ENCODE measurements at regions of chr4 and their contacts with region 1.

Region 1: GRCh38 chr4:114780205-114780604 is 181.6 kb downstream of the UGT8 start:
- DNase-seq: peak; percentile 23 to 33
- H3K4me3 ChIP-seq: no peak overlapping the region
- H3K4me3 Mint-ChIP-seq: no peak overlapping the region
- H3K27ac Mint-ChIP-seq: no peak overlapping the region
- H3K4me1 ChIP-seq: no peaks in the 10 kb centered on the region
- H3K4me1 Mint-ChIP-seq: no peaks in the 10 kb centered on the region
- H3K27me3 ChIP-seq: no peaks in the 10 kb centered on the region
- H3K27me3 Mint-ChIP-seq: peaks cover 7% of the 10 kb centered on the region
- CTCF ChIP-seq: peak; percentile 39 to 43

Region 2: GRCh38 chr4:114807759-114808404 is 27.7 kb after region 1 on chr4:
- CTCF ChIA-PET with region 1: no interaction called
- POLR2A ChIA-PET with region 1: no interaction called
- intact Hi-C with region 1: loop called (anchors 1 kb)
- DNase-seq: peak; percentile 51 to 66
- H3K4me3 ChIP-seq: no peak overlapping the region
- H3K4me3 Mint-ChIP-seq: peak overlapping the region; percentile 32
- H3K27ac Mint-ChIP-seq: no peak overlapping the region
- H3K4me1 ChIP-seq: no peaks in the 10 kb centered on the region
- H3K4me1 Mint-ChIP-seq: peaks cover 6% of the 10 kb centered on the region
- H3K27me3 ChIP-seq: no peaks in the 10 kb centered on the region
- H3K27me3 Mint-ChIP-seq: peaks cover 5% of the 10 kb centered on the region
- CTCF ChIP-seq: peak; percentile 81 to 89

Region 3: GRCh38 chr4:115090483-115091075 is 310.4 kb after region 1 on chr4:
- CTCF ChIA-PET with region 1: no interaction called
- POLR2A ChIA-PET with region 1: no interaction called
- intact Hi-C with region 1: loop called (anchors 10 kb)
- DNase-seq: peak in 1 of 2 experiments; percentile 20
- H3K4me3 ChIP-seq: no peak overlapping the region
- H3K4me3 Mint-ChIP-seq: no peak overlapping the region
- H3K27ac Mint-ChIP-seq: no peak overlapping the region
- H3K4me1 ChIP-seq: no peaks in the 10 kb centered on the region
- H3K4me1 Mint-ChIP-seq: no peaks in the 10 kb centered on the region
- H3K27me3 ChIP-seq: no peaks in the 10 kb centered on the region
- H3K27me3 Mint-ChIP-seq: peaks cover 3% of the 10 kb centered on the region
- CTCF ChIP-seq: peak; percentile 43 to 57

Region 4: GRCh38 chr4:115234405-115235093 is 454.3 kb after region 1 on chr4:
- CTCF ChIA-PET with region 1: no interaction called
- POLR2A ChIA-PET with region 1: no interaction called
- intact Hi-C with region 1: loop called (anchors 2 kb)
- DNase-seq: peak in 1 of 2 experiments; percentile 6
- H3K4me3 ChIP-seq: no peak overlapping the region
- H3K4me3 Mint-ChIP-seq: no peak overlapping the region
- H3K27ac Mint-ChIP-seq: no peak overlapping the region
- H3K4me1 ChIP-seq: no peaks in the 10 kb centered on the region
- H3K4me1 Mint-ChIP-seq: no peaks in the 10 kb centered on the region
- H3K27me3 ChIP-seq: no peaks in the 10 kb centered on the region
- H3K27me3 Mint-ChIP-seq: no peaks in the 10 kb centered on the region
- CTCF ChIP-seq: peak; percentile 28 to 29

Region 5: DNA sequence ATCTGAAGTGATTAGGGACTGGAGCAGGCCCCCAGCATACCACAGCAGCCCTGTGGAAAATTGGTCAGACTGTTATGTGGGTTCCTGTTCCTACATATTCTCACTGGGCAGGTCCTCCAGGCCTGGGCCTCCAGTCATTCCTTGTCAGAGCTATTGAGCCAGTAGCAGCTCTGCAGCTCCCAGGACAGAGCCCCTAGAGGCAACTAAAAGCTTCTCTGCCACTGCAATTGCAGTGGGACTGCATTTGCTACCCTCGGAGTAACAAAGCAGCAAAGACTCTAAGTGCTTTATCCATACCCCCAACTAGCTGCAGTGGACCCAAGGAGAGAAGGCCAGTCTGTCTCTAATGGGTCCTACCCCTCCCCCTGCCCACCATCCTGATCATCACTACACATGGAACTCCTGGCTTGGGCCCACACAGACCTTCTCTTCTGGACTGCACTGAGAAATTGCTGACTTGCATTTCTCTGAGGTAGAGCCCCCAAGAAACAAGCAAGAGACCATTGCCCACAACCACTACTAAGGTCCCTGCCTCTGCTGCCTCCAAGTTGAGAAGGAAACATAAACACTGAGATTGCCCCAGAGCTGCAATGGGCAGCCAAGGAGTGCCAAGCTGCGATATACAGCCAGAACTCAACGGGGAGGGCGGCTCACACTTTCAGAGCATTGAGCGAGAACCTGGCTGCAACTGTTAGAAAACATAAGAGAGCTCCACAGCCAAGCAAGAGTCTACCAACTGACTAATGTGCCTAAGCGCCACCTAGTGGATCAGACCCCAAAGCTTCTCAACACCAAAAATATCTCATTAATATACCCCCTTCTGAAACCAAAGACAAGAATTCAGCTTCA is 1071.9 kb after region 1 on chr4:
- CTCF ChIA-PET with region 1: interaction called, 3 read pairs
- POLR2A ChIA-PET with region 1: no interaction called
- intact Hi-C with region 1: loop called (anchors 1 kb)
- DNase-seq: peak; percentile 47 to 57
- H3K4me3 ChIP-seq: no peak overlapping the region
- H3K4me3 Mint-ChIP-seq: no peak overlapping the region
- H3K27ac Mint-ChIP-seq: no peak overlapping the region
- H3K4me1 ChIP-seq: no peaks in the 10 kb centered on the region
- H3K4me1 Mint-ChIP-seq: no peaks in the 10 kb centered on the region
- H3K27me3 ChIP-seq: no peaks in the 10 kb centered on the region
- H3K27me3 Mint-ChIP-seq: peaks cover 6% of the 10 kb centered on the region
- CTCF ChIP-seq: peak; percentile 47 to 75

Measured in Caco-2 (cell line).